Heart left ventricle (tissue), 16 donors: ENCODE measurements at regions of chr20 and their contacts with region 1.

Region 1: DNA sequence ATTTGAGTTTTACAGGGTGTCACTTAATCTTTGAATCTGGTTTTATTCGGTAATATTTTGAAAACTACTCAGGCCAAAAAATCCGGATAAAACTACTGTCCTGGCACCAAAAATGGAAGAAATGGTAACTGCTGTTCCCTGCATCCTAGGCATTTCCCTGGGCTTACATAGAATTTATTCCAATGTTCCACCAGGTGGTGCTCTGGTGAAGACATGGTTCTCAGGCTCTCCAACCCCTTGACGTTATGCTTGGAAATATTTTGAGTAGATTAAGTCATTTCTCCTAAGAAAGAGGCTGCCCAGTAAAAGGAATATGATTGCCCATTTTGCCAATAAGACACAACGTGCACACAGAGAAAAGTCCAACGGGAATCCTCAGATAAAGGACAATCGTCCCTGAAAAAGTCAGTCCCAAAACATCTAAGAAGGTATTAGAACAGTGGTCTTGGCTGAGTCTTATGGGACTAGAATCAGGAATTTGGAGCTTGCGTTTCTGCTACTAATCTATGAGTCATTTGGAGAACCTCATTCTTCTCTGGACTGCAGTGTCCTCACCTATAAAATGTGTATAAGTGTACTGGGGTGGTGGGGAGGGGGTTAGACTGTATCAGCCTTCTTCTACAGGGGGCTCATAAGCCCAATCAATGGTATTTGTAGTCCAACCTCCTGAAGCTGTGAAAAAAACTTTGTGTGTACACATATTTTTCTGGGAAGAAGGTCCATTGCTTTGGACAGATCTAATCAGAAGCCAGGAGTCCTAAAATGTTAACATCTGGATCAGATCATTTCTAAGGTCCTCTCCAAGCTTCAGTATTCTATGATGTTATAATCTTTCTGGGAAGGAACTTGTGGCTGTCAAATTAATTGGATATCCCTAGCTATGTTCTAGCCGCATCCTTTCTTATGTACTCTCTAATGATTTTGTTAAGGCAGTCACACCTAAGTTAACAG is 131.0 kb upstream of the BMP2 start:
- DNase-seq: peak in 2 of 5 donors; percentile 30 to 41
- ATAC-seq: peak; percentile 75 to 91 (median 84)
- H3K4me3 ChIP-seq: no peak overlapping the region
- H3K27ac ChIP-seq: peak overlapping the region in 2 of 12 donors; percentile 2 to 9
- H3K4me1 ChIP-seq: peaks cover 0 to 7% (median 0%) of the 10 kb centered on the region in 12 donors
- H3K27me3 ChIP-seq: no peaks in the 10 kb centered on the region
- CTCF ChIP-seq: peak in 11 of 12 donors; percentile 30 to 66 (median 45)
- POLR2A ChIP-seq: no peak

Region 2: DNA sequence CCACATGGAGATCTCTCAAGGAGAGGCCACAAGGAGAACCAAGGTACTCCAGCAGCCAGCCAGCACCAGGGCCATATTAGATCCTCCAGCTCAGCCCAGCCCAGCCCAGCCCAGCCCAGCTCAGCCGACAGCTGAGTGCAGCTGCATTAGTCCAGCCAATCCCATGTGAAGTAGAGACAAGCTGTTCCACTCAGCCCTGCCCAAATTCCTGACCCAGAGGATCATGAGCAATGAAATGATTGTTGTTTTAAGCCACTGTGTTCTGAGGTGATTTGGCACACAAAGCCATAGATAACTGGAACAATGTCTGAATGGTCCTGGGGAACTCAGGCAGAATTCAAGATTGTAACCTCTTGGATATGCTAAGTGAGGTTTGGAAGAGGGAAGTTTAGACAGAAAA is 71.5 kb after region 1 on chr20:
- intact Hi-C with region 1: loop called in 2 of 10 experiments (anchors 5 to 10 kb)
- DNase-seq: peak; percentile 41 to 80 (median 73)
- ATAC-seq: peak; percentile 81 to 96 (median 93)
- H3K4me3 ChIP-seq: no peak overlapping the region
- H3K27ac ChIP-seq: peak overlapping the region in 4 of 12 donors; percentile 4 to 50 (median 35)
- H3K4me1 ChIP-seq: peaks cover 0 to 40% (median 12%) of the 10 kb centered on the region in 12 donors
- H3K27me3 ChIP-seq: peaks cover 0 to 4% (median 0%) of the 10 kb centered on the region in 9 donors
- CTCF ChIP-seq: no peak
- POLR2A ChIP-seq: no peak